ENCODE measurements at regions of chr9 and their contacts with region 1.

Region 1: DNA sequence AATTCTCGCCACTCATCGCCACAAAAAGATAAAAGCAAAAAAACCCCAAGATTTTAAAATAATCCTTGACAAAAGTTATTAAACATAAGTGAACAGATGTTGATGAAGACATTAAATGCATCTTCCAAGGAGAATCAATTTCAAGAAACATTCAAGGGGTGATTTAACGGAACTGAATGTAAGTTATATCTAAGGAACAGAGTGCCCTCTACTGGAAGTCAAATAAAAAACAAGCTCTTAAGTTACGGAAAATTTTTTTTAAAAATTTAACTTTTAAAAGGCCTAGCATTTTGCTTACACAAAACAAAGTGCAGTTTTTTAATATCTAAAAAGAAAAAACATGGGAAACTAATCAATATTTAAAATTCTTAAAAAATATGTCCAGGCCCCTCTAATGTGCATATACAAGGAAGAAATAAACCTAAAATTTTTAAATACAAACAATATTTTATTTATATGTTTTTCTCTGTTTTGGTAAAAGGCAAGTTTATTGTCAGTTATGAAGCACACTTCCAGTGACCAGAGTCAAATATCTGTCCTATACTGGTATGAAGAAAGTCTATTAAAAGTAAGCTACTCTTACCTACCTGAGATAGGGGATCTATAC is 28.0 kb downstream of the TEX10 start:
- DNase-seq: no peak
- ATAC-seq: no peak
- H3K4me3 Mint-ChIP-seq: no peak overlapping the region
- H3K27ac Mint-ChIP-seq: 0 out of 2 replicates have a peak overlapping the region, but pooled peaks have one; percentile 26
- H3K4me1 Mint-ChIP-seq: no peaks in the 10 kb centered on the region
- H3K27me3 Mint-ChIP-seq: no peaks in the 10 kb centered on the region
- CTCF ChIP-seq: peak; percentile 22; the same call in 1 of the 2 replicates

Region 2: DNA sequence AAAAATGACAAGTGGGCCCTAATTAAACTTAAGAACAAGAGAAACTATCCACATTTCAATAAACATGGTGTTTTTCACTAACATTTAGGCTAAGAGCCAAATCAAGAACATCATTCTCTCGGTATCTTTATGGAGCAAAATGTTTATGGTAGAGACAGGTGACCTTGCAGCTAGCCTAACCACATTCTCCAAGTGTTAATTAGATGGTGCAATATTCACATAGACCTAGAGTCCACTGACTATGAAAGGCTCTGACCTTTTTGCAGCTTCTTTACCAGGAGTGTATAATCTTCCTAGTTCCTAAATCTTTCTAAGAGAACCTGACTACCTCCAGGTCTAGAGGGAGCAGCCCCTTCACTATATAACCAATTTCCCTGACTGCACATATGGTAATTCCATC is 19.8 kb before region 1 on chr9:
- CTCF ChIA-PET with region 1: interaction called, 10 read pairs
- POLR2A ChIA-PET with region 1: no interaction called
- DNase-seq: no peak
- ATAC-seq: no peak
- H3K4me3 Mint-ChIP-seq: no peak overlapping the region
- H3K27ac Mint-ChIP-seq: peak overlapping the region; percentile 16; the same call in 1 of the 2 replicates
- H3K4me1 Mint-ChIP-seq: peaks cover 15% of the 10 kb centered on the region
- H3K27me3 Mint-ChIP-seq: no peaks in the 10 kb centered on the region
- CTCF ChIP-seq: no peak

Region 3: GRCh38 chr9:100346836-100347235 is 22.1 kb after region 1 on chr9:
- CTCF ChIA-PET with region 1: interaction called, 18 read pairs
- POLR2A ChIA-PET with region 1: no interaction called
- DNase-seq: no peak
- ATAC-seq: no peak
- H3K4me3 Mint-ChIP-seq: no peak overlapping the region
- H3K27ac Mint-ChIP-seq: no peak overlapping the region
- H3K4me1 Mint-ChIP-seq: peaks cover 53% of the 10 kb centered on the region
- H3K27me3 Mint-ChIP-seq: no peaks in the 10 kb centered on the region
- CTCF ChIP-seq: no peak

Region 4: GRCh38 chr9:100352727-100353505 is 28.2 kb after region 1 on chr9 and contains the start of gene TEX10:
- CTCF ChIA-PET with region 1: interaction called, 18 read pairs
- POLR2A ChIA-PET with region 1: no interaction called
- DNase-seq: peak; percentile 93
- ATAC-seq: peak; percentile 96
- H3K4me3 Mint-ChIP-seq: peak within 1 kb of the TSS; percentile 94
- H3K27ac Mint-ChIP-seq: peak within 1 kb of the TSS; percentile 91
- H3K4me1 Mint-ChIP-seq: peaks cover 49% of the 10 kb centered on the region
- H3K27me3 Mint-ChIP-seq: no peaks in the 10 kb centered on the region
- CTCF ChIP-seq: no peak
- total RNA-seq, gene TEX10: 47.6 to 64.7 TPM (median 50.5 TPM) in 3 replicates

Measured in WTC11 (cell line).